ENCODE measurements at regions of chr2 and their contacts with region 1.

Region 1: DNA sequence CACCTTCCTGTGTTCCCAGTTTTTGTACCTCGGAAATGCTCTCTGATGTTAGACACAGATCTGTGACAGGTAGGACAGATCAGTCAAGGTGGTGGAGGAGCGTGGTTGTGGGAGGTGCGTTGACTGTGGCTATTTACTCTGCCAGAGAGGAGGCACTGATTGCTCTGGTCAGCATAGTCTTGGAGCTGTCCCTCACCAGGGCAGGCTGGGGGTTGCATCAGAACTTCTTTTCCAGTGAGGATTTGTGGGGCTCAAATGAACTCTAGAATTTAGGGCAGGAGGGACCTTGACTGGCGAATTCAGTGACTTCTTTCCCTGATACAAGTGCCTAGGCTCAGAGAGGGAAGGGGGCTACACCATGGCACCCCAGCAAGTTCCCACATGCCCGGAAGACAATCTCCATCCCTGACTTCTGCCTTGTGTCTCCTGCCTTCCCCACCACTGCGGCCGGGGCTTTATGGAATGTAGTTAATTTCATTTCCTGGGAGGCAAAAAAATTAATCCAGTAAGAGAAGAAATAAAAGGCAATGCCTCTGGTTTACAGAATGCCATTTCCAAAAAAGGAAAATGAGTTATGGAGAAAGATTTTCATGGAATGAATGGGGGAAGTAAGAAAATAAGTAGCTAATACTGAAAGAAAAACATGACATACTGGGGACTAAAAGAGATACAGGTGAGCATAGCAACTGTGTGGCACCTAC is 26.1 kb downstream of the NIFK start:
- DNase-seq: no peak
- H3K4me3 ChIP-seq: no peak overlapping the region
- H3K27ac ChIP-seq: no peak overlapping the region
- H3K4me1 ChIP-seq: peaks cover 0 to 7% (median 0%) of the 10 kb centered on the region in 4 donors
- H3K27me3 ChIP-seq: no peaks in the 10 kb centered on the region
- CTCF ChIP-seq: no peak
- EP300 ChIP-seq: no peak
- POLR2A ChIP-seq: no peak

Region 2: DNA sequence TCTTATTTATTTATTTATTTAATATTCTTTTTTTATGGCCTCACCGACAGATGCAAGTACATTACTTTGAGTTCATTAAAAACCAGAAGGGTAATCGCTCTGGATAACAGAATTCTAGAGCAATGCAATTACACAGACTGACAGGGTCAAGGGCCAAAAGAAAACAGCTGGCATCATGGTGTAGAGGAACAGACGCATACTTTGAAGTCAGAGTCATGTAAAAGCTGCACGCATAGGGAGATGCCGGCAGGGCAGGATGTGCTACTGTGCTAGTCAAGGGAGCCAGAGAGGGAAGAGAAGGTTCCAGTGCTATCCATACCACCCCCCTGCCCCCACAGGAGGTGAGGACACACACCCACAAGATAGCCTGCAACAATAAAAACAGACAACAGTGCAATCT is 310.4 kb before region 1 on chr2:
- intact Hi-C with region 1: loop called (anchors 10 kb)
- DNase-seq: no peak
- H3K4me3 ChIP-seq: no peak overlapping the region
- H3K27ac ChIP-seq: no peak overlapping the region
- H3K4me1 ChIP-seq: no peaks in the 10 kb centered on the region
- H3K27me3 ChIP-seq: no peaks in the 10 kb centered on the region
- CTCF ChIP-seq: no peak
- EP300 ChIP-seq: no peak
- POLR2A ChIP-seq: no peak

Region 3: GRCh38 chr2:121810959-121811853 is 100.6 kb after region 1 on chr2:
- intact Hi-C with region 1: no loop called
- DNase-seq: peak; percentile 39 to 90
- H3K4me3 ChIP-seq: no peak overlapping the region
- H3K27ac ChIP-seq: no peak overlapping the region
- H3K4me1 ChIP-seq: peaks cover 0 to 8% (median 0%) of the 10 kb centered on the region in 4 donors
- H3K27me3 ChIP-seq: no peaks in the 10 kb centered on the region
- CTCF ChIP-seq: peak in 3 of 7 experiments; percentile 22 to 31 (median 28)
- EP300 ChIP-seq: no peak
- POLR2A ChIP-seq: no peak